ENCODE measurements at regions of chr9 and their contacts with region 1.

Region 1: DNA sequence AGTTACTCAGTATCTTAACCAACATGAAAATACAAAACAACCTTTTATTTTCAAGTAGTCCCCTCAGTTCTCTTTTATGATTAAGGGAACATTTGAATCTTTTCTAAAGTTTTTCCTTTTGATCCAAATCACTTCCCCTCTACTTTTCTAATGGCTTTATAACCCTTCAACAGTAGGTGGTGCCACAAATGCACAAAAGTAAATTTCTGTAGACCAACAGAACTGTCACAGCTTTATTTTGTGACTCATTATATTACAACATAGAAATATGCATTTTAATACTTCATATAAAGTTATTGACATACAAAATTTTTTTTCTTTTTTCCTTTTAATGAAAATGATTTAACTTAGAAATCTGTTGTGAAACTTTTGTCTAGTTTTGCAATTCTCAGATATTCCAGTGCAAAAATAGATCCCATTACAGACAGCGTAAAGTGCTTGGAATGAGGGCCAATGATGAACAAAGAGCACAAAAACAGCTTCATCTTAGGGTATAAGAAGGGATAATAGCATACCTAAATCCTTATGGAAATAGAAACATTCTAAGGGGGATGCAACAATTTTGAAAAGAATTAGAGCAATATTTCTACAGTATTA is 17.0 kb downstream of the NIPSNAP3B start:
- DNase-seq: peak; percentile 32
- ATAC-seq: peak; percentile 51; the same call in 1 of the 2 replicates
- H3K4me3 ChIP-seq: no peak overlapping the region
- H3K27ac ChIP-seq: no peak overlapping the region
- H3K4me1 ChIP-seq: no peaks in the 10 kb centered on the region
- H3K27me3 ChIP-seq: no peaks in the 10 kb centered on the region
- CTCF ChIP-seq: peak; percentile 53
- POLR2A ChIP-seq: no peak
- RAD21 ChIP-seq: peak; percentile 64

Region 2: DNA sequence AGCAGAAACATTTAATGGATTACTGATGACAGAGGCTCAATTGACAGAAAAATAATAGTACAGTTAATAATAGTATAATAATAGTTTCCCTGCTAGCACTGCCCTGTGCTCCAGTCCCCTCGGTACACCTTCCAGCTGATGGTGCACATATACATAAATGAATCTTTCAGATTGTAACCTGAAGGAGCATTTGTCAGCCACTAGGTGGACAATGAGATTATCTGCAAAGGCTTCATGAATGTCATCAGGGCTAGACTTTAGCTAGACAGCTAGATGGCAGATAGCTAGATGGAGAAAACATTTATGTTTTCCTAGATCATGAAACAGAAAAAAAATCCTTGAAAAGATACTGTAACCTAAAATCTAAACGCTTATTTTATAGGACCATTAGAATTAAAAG is 991.2 kb before region 1 on chr9:
- CTCF ChIA-PET with region 1: interaction called, 12 read pairs
- POLR2A ChIA-PET with region 1: no interaction called
- dilution Hi-C with region 1: no loop called
- in situ Hi-C with region 1: no loop called
- intact Hi-C with region 1: no loop called
- DNase-seq: no peak
- ATAC-seq: no peak
- H3K4me3 ChIP-seq: no peak overlapping the region
- H3K27ac ChIP-seq: no peak overlapping the region
- H3K4me1 ChIP-seq: no peaks in the 10 kb centered on the region
- H3K27me3 ChIP-seq: no peaks in the 10 kb centered on the region
- CTCF ChIP-seq: no peak
- POLR2A ChIP-seq: no peak
- RAD21 ChIP-seq: no peak

Region 3: GRCh38 chr9:104860263-104860662 is 79.4 kb after region 1 on chr9:
- CTCF ChIA-PET with region 1: no interaction called
- POLR2A ChIA-PET with region 1: no interaction called
- dilution Hi-C with region 1: no loop called
- in situ Hi-C with region 1: no loop called
- intact Hi-C with region 1: no loop called
- DNase-seq: peak; percentile 11
- ATAC-seq: no peak
- H3K4me3 ChIP-seq: no peak overlapping the region
- H3K27ac ChIP-seq: peak overlapping the region; percentile 37; the same call in 1 of the 2 replicates
- H3K4me1 ChIP-seq: peaks cover 34% of the 10 kb centered on the region
- H3K27me3 ChIP-seq: no peaks in the 10 kb centered on the region
- CTCF ChIP-seq: no peak
- POLR2A ChIP-seq: no peak
- RAD21 ChIP-seq: no peak

Region 4: GRCh38 chr9:105414947-105415661 is 634.2 kb after region 1 on chr9:
- CTCF ChIA-PET with region 1: no interaction called
- POLR2A ChIA-PET with region 1: no interaction called
- dilution Hi-C with region 1: no loop called
- in situ Hi-C with region 1: loop called (anchors 10 kb)
- intact Hi-C with region 1: loop called (anchors 5 kb)
- DNase-seq: peak; percentile 55
- ATAC-seq: peak; percentile 70
- H3K4me3 ChIP-seq: no peak overlapping the region
- H3K27ac ChIP-seq: no peak overlapping the region
- H3K4me1 ChIP-seq: peaks cover 6% of the 10 kb centered on the region
- H3K27me3 ChIP-seq: no peaks in the 10 kb centered on the region
- CTCF ChIP-seq: peak; percentile 77
- POLR2A ChIP-seq: no peak
- RAD21 ChIP-seq: peak; percentile 97

Measured in IMR-90 (cell line).